Spleen (tissue), 13 donors: ENCODE measurements at regions of chr15 and their contacts with region 1.

Region 1: DNA sequence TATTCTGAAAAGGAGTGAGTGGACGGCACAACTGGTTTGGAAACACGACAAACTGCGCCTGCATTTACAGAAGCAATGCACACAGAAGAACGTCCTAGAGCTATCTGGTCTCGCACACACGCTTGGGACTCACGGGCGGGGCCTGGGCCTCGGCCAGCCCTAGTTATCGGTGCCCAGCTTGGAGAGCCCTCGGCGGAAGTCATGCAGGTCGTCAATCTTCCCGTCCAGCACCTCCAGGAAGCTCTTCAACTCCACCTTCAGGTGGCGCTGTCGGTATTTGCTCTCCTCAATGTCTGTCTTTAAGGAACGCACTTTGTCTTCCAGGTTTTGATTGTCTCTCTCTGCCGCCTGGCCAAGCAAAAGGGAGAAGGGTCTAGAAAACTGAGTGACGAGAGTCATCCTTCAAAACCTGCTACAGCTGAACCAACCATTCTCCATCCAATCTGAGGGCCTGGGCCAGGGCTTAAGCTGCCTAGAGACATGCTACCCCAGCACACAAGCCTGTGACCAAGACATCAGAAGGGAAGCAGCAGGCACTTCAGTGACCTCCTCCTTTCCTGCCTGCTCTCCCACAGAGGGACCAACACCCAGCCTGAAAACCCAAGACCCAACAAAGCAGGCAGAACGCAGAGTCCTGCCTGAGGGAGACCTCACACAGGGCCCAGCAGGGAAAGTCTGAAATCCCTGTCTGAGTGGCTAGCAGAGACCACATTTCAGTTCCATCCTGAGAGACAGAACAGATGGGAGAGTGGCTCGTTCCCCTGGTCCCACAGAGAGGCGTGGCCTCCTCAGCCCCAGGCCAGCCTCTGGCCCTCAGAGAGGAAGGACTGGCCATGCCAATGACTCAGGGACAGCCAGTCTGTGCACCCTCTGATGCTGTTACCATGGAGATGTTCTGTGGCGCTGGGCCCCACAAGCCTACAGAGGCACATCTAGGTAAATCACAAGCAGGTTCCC is 40.4 kb downstream of the WHAMM start:
- DNase-seq: peak; percentile 85
- H3K4me3 ChIP-seq: peak overlapping the region in 1 of 8 donors; percentile 1
- H3K27ac ChIP-seq: peak overlapping the region in 7 of 8 donors; percentile 13 to 72 (median 63)
- H3K4me1 ChIP-seq: peaks cover 4 to 45% (median 21%) of the 10 kb centered on the region in 6 donors
- H3K27me3 ChIP-seq: no peaks in the 10 kb centered on the region
- CTCF ChIP-seq: peak in 9 of 11 experiments; percentile 43 to 80 (median 69)
- POLR2A ChIP-seq: no peak

Region 2: DNA sequence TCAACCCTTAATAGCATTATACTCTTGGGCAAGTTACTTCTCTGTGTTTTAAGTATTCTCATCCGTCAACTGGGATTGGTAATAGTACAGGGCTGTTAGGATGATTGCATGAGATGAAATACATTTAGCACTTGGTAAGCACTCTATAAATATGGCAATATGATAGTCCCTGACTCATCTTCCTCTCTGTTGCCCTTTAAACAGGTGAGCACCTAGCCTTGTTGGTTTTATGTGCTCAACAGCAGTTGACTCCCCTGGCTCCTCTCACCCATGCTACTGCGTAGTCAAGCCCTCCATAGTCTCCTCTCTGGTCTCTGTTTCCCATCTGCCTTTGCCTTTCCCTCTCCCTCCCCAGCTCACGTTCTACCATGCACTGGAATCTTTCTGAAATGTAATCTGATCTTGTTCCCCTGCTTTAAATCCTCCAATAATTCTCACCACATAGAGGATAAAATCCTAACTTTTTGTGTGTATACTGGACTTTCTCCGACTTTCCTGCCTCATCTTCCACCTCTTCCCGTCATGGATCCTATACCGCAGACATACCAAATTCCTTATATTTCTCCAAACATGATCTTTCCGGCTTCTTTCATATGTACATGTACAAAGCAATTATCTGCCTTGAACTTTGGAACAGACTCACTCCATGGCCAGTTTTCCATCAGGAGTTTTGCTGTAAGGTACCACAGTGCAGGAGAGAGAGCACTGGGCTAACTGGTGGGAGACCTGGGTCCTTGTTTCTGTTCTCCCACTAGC is 86.3 kb before region 1 on chr15:
- intact Hi-C with region 1: no loop called
- DNase-seq: no peak
- H3K4me3 ChIP-seq: no peak overlapping the region
- H3K27ac ChIP-seq: no peak overlapping the region
- H3K4me1 ChIP-seq: no peaks in the 10 kb centered on the region
- H3K27me3 ChIP-seq: no peaks in the 10 kb centered on the region
- CTCF ChIP-seq: no peak
- POLR2A ChIP-seq: no peak

Region 3: GRCh38 chr15:82900511-82901060 is 50.8 kb after region 1 on chr15:
- intact Hi-C with region 1: no loop called
- DNase-seq: no peak
- H3K4me3 ChIP-seq: no peak overlapping the region
- H3K27ac ChIP-seq: no peak overlapping the region
- H3K4me1 ChIP-seq: no peaks in the 10 kb centered on the region
- H3K27me3 ChIP-seq: no peaks in the 10 kb centered on the region
- CTCF ChIP-seq: no peak
- POLR2A ChIP-seq: no peak

Region 4: GRCh38 chr15:82985688-82986441 is 136.0 kb after region 1 on chr15 and contains the start of gene RAMAC:
- intact Hi-C with region 1: loop called (anchors 5 kb)
- DNase-seq: peak; percentile 97
- H3K4me3 ChIP-seq: peak within 1 kb of the TSS; percentile 51 to 95 (median 77)
- H3K27ac ChIP-seq: peak within 1 kb of the TSS; percentile 67 to 90 (median 81)
- H3K4me1 ChIP-seq: peaks cover 10 to 38% (median 20%) of the 10 kb centered on the region in 6 donors
- H3K27me3 ChIP-seq: no peaks in the 10 kb centered on the region
- CTCF ChIP-seq: peak in 1 of 11 experiments; percentile 38
- POLR2A ChIP-seq: peak in 1 of 3 donors; percentile 28
- total RNA-seq, gene RAMAC: 12.8 to 19.4 (median 15.2) TPM